Activated CD4-positive, alpha-beta T cell treated with anti-CD3 and anti-CD28 coated beads, Interleukin-2, amount 10 ng/mL, durations not matched to agents 24 days and 14 days (primary cell): ENCODE measurements at regions of chr1 and their contacts with region 1.

Region 1: DNA sequence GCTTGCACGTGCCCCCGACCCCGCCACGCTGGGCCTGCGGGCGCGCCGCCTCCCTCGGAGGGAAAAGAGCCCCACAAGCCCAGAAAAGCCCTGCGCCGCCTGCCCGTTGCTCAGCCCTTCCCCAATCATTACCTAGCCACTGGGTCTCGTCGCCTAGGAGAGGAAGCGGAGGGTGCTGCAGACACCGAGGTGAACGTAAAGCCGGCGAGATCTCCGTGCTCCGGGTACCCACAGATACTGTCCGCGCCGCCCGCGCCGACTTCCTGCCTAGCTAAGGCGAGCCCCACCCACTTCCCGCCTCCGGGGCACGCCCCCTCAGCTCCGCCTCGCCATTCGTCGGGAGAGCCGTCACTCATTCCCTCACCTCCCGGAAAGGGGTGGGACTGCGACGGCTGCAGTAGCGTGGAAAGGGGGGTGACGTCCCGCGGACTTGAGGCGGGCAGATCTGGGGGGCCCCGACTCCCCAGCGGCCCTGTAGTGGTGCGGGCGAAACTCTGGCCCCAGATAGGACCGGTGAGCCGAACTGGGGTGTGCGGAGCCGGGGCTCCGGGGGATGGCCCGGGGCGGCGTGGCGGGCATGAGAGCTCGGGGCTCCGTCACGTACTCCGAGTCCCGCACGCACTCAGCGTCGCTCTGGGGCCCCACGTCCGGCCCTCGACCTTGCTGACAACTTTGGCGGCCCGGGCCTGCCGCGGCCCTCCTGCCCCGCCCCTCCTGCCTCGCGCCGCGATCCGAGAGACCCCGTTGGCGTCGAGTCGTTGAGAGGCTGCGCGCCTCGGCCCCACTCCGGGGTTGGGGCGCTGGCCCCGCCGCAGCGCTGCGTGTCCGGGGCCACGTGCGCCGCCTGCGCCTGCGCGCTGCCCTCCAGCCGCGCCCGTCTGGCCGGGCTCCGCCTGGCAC is at the start of gene ENO1:
- DNase-seq: peak; percentile 100
- H3K4me3 Mint-ChIP-seq: peak within 1 kb of the TSS; percentile 92
- H3K27ac Mint-ChIP-seq: peak within 1 kb of the TSS; percentile 100
- H3K4me1 Mint-ChIP-seq: peaks cover 30% of the 10 kb centered on the region
- H3K27me3 Mint-ChIP-seq: no peaks in the 10 kb centered on the region
- total RNA-seq, gene ENO1: 3,899 and 3,999 TPM in 2 replicates

Region 2: DNA sequence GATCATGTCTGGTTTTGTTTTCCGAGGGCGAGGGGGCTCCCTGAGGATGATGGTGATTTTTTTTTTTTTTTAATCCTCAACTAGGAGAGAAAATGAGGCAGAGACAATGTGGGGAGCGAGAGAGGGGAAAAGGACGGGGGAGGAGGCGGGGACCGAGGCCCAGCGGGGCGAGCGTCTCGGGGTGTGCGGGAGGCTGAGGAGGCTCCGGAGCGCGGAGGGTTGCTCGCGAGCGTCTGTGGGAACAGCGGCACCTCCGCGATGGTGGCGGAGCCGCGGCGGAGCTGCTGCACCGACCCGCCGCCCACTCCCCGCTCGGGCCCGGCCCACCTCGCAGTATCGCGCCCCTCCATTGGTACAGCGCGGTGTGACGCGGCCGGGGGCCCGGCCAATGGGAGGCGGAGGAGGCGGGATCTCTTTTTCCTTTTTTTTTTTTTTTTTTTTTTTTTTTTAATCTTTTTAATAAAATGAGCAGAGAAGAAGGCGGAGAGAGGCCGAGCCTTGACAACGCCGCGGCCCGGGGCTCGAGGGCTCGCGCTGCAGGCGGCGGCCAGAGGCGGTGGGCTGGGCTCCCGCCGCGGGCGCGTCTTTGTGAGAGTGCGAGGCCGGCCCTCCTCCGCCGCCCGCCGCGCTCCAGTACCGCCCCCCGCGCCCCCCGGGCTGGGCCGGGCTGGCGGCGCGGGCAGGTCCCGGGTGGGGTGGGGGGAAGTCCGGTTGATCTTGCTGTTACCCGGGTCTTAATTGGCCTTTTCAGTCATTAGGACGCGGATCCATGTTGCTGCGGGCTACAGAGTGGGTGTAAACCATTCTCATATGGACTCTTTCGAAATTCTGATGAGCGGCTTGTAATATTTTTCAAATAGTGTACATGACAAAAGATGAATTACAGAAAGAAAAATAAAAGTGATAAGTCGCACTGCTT is 61.0 kb before region 1 on chr1 and contains the start of gene RERE:
- intact Hi-C with region 1: loop called (anchors 2 kb)
- DNase-seq: peak; percentile 99
- H3K4me3 Mint-ChIP-seq: peak within 1 kb of the TSS; percentile 96
- H3K27ac Mint-ChIP-seq: peak within 1 kb of the TSS; percentile 92
- H3K4me1 Mint-ChIP-seq: peaks cover 37% of the 10 kb centered on the region
- H3K27me3 Mint-ChIP-seq: peaks cover 7% of the 10 kb centered on the region
- total RNA-seq, gene RERE: 69.3 and 85.6 TPM in 2 replicates

Region 3: GRCh38 chr1:8847990-8848389 is 30.7 kb before region 1 on chr1:
- intact Hi-C with region 1: no loop called
- DNase-seq: no peak
- H3K4me3 Mint-ChIP-seq: no peak overlapping the region
- H3K27ac Mint-ChIP-seq: peak overlapping the region; percentile 32
- H3K4me1 Mint-ChIP-seq: peaks cover 3% of the 10 kb centered on the region
- H3K27me3 Mint-ChIP-seq: no peaks in the 10 kb centered on the region

Region 4: DNA sequence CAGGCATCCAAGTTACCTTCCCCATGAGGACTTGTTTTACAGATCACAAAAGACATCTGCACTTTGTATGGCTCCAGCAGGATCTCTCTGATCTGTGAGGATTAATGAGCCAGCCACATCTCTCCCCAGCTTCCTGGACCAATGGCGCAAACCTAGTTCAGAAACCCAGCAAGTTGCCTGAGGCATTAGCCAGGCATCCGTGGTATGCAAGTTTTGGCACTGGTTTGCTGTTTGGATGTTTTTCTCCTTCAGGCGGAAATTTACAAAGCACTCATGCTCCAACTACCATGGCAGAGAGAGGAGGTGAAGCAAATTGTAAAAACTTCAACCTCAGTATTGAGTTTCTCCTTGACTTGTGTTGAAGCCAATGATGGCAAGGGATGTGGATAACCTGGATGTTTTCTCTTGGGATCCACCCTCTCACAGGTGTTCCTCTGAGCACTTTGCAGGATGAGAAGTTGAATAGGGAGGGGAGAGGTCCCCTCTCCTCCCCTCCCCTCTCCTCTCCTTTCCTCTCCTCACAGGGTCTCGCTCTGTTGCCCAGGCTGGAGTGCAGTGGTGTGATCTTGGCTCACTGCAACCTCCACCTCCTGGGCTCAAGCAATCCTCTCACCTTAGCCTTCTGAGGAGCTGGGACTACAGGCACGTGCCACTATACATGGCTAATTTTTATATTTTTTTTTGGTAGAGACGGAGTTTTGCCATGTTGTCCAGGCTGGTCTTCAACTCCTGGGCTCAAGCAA is 25.4 kb after region 1 on chr1:
- intact Hi-C with region 1: loop called (anchors 1 kb)
- DNase-seq: no peak
- H3K4me3 Mint-ChIP-seq: no peak overlapping the region
- H3K27ac Mint-ChIP-seq: peak overlapping the region; percentile 83
- H3K4me1 Mint-ChIP-seq: peaks cover 46% of the 10 kb centered on the region
- H3K27me3 Mint-ChIP-seq: no peaks in the 10 kb centered on the region

Region 5: DNA sequence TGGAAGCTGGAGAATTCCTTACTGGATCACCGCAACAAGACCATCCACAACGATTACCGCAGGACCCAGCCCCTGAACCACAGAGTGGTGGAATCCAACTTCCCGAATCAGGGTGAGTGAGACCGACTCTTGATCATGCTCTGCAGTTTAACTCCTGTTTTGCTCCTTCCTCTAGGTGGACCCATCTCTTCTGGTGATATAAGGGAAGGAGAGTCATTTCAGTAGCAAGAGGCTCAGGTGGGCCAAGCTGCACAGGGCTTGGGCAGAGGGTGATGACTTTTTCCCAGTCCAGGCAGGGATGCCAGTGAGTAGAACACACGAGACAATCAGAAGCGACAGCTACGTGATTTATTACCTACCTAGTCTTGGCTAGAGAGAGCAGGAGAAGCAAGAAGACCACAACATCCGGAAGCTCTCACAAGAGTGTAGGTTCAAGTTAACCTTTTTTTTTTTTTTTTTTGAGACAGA is 92.2 kb after region 1 on chr1:
- intact Hi-C with region 1: loop called (anchors 5 kb)
- DNase-seq: peak; percentile 88
- H3K4me3 Mint-ChIP-seq: peak overlapping the region; percentile 91
- H3K27ac Mint-ChIP-seq: peak overlapping the region; percentile 99
- H3K4me1 Mint-ChIP-seq: peaks cover 51% of the 10 kb centered on the region
- H3K27me3 Mint-ChIP-seq: no peaks in the 10 kb centered on the region

Region 6: DNA sequence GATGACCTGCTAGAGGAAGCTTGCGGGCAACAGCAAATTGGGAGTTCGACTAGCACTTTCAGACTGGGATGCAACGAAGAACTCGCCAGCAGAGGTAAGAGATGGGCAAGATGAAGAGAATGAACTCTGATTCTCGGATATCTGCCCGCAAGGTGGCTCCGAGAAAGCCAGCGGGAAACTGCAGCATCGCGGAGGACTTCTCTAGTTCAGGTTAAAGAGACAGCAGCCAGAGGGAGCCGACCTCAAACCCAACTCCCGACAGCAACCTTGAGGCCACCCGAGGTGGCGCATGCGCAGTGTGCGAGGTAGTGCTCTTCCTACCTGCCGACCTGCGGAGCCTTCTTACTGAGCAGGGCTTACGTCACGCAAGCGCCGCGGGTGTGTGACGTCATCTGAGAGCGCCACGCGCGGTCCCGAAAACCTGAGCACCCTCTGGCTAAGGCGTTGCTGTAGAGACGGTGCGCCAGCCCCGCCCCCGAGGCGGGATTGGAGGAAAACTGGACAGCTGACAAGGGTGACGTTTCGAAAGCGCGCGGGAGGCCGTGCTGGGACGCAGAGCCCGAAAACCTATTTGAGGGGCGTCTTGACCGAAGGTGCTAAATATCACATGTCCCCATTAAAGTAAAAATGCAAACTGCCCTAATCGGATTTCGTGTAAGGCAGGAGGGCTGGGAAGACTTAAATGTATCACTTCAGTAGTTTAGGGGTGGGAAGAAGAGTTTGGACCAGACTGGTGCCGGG is 550.1 kb after region 1 on chr1:
- intact Hi-C with region 1: loop called (anchors 5 kb)
- DNase-seq: peak; percentile 100
- H3K4me3 Mint-ChIP-seq: peak overlapping the region; percentile 97
- H3K27ac Mint-ChIP-seq: peak overlapping the region; percentile 97
- H3K4me1 Mint-ChIP-seq: peaks cover 45% of the 10 kb centered on the region
- H3K27me3 Mint-ChIP-seq: peaks cover 13% of the 10 kb centered on the region